Endothelial cell of umbilical vein (primary cell): ENCODE measurements at regions of chr4 and their contacts with region 1.

Region 1: GRCh38 chr4:69707807-69708206 is 52.6 kb downstream of the SULT1B1 start:
- DNase-seq: no peak
- H3K4me3 ChIP-seq: no peak overlapping the region
- H3K27ac ChIP-seq: peak overlapping the region; percentile 79
- H3K4me1 ChIP-seq: peaks cover 17% of the 10 kb centered on the region
- H3K27me3 ChIP-seq: no peaks in the 10 kb centered on the region
- CTCF ChIP-seq: no peak
- POLR2A ChIP-seq: no peak

Region 2: DNA sequence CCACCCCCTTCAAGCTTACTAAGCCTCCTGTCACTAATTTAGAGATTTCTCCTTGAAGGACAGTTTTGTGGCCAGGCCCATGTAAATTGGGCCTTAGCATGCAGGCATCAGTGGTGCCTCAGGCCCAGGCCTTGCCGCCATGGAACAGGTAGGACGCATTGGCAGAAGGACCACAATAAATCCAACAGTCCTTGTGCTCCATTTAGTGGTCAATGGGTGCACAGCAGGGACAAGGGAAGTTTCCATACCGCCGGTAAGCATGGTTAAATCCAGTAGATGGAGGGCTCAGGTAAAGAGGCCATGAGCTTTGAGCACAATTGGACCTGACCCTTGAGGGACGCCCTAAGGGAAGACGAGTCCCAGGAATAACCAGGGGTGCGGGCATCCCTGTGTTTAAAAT is 330.2 kb before region 1 on chr4:
- CTCF ChIA-PET with region 1: no interaction called
- POLR2A ChIA-PET with region 1: no interaction called
- dilution Hi-C with region 1: no loop called
- intact Hi-C with region 1: no loop called
- DNase-seq: no peak
- H3K4me3 ChIP-seq: no peak overlapping the region
- H3K27ac ChIP-seq: no peak overlapping the region
- H3K4me1 ChIP-seq: no peaks in the 10 kb centered on the region
- H3K27me3 ChIP-seq: no peaks in the 10 kb centered on the region
- CTCF ChIP-seq: no peak
- POLR2A ChIP-seq: no peak

Region 3: DNA sequence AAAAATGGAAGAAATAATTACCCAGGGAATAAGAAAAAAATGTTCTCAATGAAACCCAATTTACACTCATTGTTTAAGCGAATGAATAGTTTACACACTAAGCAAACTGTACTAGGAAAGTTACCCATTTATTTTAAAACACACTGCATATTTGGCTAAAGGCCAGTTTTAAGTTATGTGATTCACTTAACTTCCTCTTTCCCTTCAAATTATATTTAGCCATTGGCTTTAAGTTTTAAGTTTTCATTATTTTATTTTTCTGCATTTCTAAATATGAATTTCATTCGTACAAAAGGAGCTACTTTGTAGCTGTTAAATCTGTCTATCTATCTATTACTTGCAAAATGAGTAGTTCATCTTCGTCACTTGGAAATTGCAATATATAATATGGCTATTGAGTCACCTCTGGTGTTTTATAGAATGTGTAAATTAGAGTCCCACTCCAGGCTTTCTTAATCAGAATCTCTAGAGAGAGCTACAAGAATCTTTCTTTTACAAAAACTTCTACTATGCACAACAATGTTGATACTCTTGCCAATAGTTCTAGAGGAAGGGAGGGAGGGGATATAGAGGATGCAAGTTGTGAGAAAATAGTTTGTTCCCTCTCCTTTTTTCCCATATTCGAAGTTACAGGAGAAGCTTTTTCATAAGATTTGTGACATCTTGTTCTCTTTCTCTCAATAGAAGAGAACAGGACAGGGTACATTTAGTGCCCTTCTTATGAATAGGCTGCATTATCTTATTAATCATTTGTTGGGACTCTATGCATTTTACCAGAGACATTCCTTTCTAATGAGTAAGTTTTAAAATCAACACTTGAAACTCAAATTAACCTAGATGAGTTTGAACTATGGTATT is 10.8 kb after region 1 on chr4:
- CTCF ChIA-PET with region 1: no interaction called
- POLR2A ChIA-PET with region 1: no interaction called
- dilution Hi-C with region 1: no loop called
- intact Hi-C with region 1: loop called (anchors 1 kb)
- DNase-seq: peak; percentile 83
- H3K4me3 ChIP-seq: no peak overlapping the region
- H3K27ac ChIP-seq: peak overlapping the region; percentile 80
- H3K4me1 ChIP-seq: peaks cover 56% of the 10 kb centered on the region
- H3K27me3 ChIP-seq: no peaks in the 10 kb centered on the region
- CTCF ChIP-seq: no peak
- POLR2A ChIP-seq: peak; percentile 4